Cardiac septum (tissue), 1 donor: ENCODE measurements at regions of chr10 and their contacts with region 1.

Region 1: GRCh38 chr10:76547352-76547972 is 1090.1 kb downstream of the KCNMA1 start:
- DNase-seq: peak; percentile 77

Region 2: GRCh38 chr10:76303682-76304316 is 243.7 kb before region 1 on chr10:
- intact Hi-C with region 1: loop called (anchors 5 kb)
- DNase-seq: peak; percentile 77

Region 3: GRCh38 chr10:76492026-76492425 is 55.4 kb before region 1 on chr10:
- intact Hi-C with region 1: no loop called
- DNase-seq: no peak

Region 4: GRCh38 chr10:76509446-76509845 is 38.0 kb before region 1 on chr10:
- intact Hi-C with region 1: no loop called
- DNase-seq: no peak